Common myeloid progenitor, CD34-positive (primary cell): ENCODE measurements at regions of chr12 and their contacts with region 1.

Region 1: DNA sequence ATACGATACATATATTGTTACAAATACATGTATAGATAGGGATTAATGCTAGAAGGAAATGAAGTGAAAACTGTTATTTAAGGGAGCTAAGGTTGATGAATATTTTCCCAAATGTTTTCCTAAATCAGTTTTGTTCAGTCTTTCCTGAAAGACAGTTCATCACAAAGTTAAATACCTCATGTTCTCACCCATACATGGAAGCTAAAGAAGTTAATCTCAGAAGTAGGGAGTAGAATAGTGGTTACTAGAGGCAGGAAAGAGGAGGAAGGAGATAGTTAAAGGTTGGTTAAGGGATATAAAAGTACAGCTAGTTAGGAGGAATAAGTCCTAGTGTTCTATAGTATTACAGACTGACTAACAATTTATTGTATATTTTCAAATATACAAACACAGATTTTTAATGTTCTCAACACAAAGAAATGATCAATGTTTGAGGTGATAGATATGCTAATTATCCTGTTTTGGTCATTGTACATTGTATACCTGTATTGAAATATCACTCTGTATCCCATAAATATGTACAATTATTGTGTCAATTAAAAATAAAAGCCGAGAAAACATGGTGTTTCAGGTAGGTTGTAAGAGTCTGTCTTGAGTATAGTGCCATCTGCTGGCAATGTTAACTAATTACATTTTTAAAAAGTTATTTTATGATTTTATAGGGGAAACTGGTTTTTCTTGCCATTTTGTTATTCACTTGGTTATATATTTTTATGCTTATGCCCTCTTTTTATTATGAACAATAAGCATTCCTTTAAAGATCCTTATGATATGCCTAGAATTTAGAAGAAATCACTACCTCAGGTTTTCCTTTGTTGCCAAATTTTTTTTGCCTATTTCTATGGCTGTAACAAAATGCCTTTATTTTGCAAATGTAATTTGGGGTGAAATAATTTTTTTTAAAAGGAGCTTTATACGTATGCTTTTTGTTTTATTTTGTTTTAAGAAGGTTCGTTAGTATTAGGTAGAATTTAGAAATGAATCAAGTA is 26.9 kb downstream of the ZDHHC17 start:
- DNase-seq: peak; percentile 17 to 57 (median 56)
- H3K4me3 ChIP-seq: no peak overlapping the region
- H3K27ac ChIP-seq: no peak overlapping the region
- H3K4me1 ChIP-seq: peaks cover 0 to 2% (median 0%) of the 10 kb centered on the region in 4 experiments
- H3K27me3 ChIP-seq: no peaks in the 10 kb centered on the region

Region 2: GRCh38 chr12:76621582-76622024 is 169.3 kb before region 1 on chr12:
- CTCF ChIA-PET with region 1: interaction called, 52 read pairs
- POLR2A ChIA-PET with region 1: no interaction called
- DNase-seq: peak; percentile 70 to 86 (median 77)
- H3K4me3 ChIP-seq: no peak overlapping the region
- H3K27ac ChIP-seq: no peak overlapping the region
- H3K4me1 ChIP-seq: peaks cover 0 to 2% (median 0%) of the 10 kb centered on the region in 4 experiments
- H3K27me3 ChIP-seq: no peaks in the 10 kb centered on the region

Region 3: GRCh38 chr12:76685246-76685678 is 105.6 kb before region 1 on chr12:
- CTCF ChIA-PET with region 1: interaction called, 10 read pairs
- POLR2A ChIA-PET with region 1: no interaction called
- DNase-seq: peak in 1 of 3 donors; percentile 34
- H3K4me3 ChIP-seq: peak overlapping the region in 3 of 7 experiments; percentile 6 to 59 (median 38)
- H3K27ac ChIP-seq: no peak overlapping the region
- H3K4me1 ChIP-seq: peaks cover 4 to 19% (median 10%) of the 10 kb centered on the region in 4 experiments
- H3K27me3 ChIP-seq: no peaks in the 10 kb centered on the region

Region 4: DNA sequence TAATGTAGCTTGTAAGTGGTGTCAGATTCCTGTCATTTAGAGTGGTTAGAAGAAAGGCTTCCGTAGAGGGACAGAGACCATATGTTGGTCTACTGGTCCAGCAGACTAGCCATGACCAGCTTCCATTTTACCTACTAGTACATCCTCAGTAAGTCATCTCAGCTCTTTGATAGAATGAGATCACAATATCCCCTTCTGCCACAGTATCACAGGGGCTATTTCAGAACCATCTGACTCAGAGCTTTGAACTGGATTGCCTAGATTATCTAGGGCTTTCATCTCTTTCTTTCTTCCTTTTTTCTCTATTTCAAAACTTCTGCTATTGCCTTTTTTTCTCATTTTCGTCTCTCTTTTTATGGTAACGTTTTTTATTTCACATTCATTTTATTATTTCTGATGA is 22.3 kb before region 1 on chr12:
- CTCF ChIA-PET with region 1: interaction called, 21 read pairs
- POLR2A ChIA-PET with region 1: no interaction called
- DNase-seq: peak in 2 of 3 donors; percentile 52 to 57
- H3K4me3 ChIP-seq: no peak overlapping the region
- H3K27ac ChIP-seq: no peak overlapping the region
- H3K4me1 ChIP-seq: peaks cover 7 to 29% (median 22%) of the 10 kb centered on the region in 4 experiments
- H3K27me3 ChIP-seq: no peaks in the 10 kb centered on the region

Region 5: GRCh38 chr12:76777765-76778216 is 13.1 kb before region 1 on chr12:
- CTCF ChIA-PET with region 1: interaction called, 13 read pairs
- POLR2A ChIA-PET with region 1: no interaction called
- DNase-seq: peak; percentile 19 to 68 (median 52)
- H3K4me3 ChIP-seq: peak overlapping the region in 1 of 7 experiments; percentile 6
- H3K27ac ChIP-seq: no peak overlapping the region
- H3K4me1 ChIP-seq: peaks cover 5 to 20% (median 12%) of the 10 kb centered on the region in 4 experiments
- H3K27me3 ChIP-seq: no peaks in the 10 kb centered on the region

Region 6: GRCh38 chr12:76920172-76921014 is 129.5 kb after region 1 on chr12:
- CTCF ChIA-PET with region 1: no interaction called
- POLR2A ChIA-PET with region 1: no interaction called
- DNase-seq: peak; percentile 33 to 92 (median 88)
- H3K4me3 ChIP-seq: peak overlapping the region in 3 of 7 experiments; percentile 9 to 50 (median 43)
- H3K27ac ChIP-seq: no peak overlapping the region
- H3K4me1 ChIP-seq: peaks cover 6 to 23% (median 20%) of the 10 kb centered on the region in 4 experiments
- H3K27me3 ChIP-seq: no peaks in the 10 kb centered on the region